Left cardiac atrium (tissue), 4 donors: ENCODE measurements at regions of chr12 and their contacts with region 1.

Region 1: DNA sequence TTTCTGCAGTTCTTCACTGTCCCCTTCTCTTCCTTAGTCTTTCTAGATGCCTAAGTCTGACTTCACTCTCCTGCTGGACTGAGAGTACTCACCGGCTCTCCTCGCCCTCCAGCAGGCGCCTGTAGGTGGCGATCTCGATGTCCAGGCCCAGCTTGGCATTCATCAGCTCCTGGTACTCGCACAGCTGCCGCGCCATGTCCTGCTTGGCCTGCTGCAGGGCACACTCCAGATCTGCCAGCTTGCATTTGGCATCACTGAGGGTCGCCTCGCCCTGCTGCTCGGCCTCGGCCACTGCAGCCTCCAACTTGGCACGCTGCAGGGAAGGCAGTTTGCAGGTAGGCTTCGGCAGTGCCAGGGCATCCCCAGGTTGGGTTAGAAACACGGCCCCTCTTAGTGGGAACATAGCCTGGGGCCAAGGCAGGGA is 5.2 kb downstream of the KRT84 start:
- DNase-seq: no peak
- ATAC-seq: peak in 1 of 2 donors; percentile 51

Region 2: DNA sequence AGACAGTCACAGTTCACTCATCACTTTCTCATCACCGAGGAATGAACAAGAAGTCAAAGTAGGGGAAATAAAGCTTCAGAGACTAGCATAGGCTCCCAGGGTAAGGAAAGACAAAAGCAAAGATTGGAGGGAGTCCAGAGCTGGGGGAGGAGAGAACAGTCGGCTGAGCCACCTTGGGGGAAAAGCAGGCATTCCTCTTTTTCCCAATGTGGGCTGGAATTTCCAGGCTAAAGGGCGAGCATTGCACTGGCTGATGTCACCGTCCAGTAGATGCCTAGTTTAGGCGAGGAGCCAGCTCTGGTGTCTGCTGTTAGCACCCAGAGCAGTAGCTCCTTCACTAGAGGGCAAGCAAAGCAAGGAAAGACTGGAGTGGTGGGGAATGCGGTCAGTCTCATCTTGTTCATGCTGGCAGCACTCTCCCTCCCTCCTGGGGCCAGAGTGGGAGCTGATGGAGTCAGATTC is 62.3 kb after region 1 on chr12:
- intact Hi-C with region 1: no loop called
- DNase-seq: peak; percentile 55
- ATAC-seq: peak; percentile 55 to 83

Region 3: GRCh38 chr12:52506858-52507715 is 126.8 kb after region 1 on chr12:
- intact Hi-C with region 1: loop called in 1 of 2 experiments (anchors 5 kb)
- DNase-seq: no peak
- ATAC-seq: peak; percentile 68 to 77

Region 4: GRCh38 chr12:52865090-52865944 is 485.0 kb after region 1 on chr12:
- intact Hi-C with region 1: loop called in 1 of 2 experiments (anchors 5 kb)
- DNase-seq: peak; percentile 68
- ATAC-seq: peak; percentile 65 to 70